CD8-positive, alpha-beta memory T cell (primary cell): ENCODE measurements at regions of chr20 and their contacts with region 1.

Region 1: DNA sequence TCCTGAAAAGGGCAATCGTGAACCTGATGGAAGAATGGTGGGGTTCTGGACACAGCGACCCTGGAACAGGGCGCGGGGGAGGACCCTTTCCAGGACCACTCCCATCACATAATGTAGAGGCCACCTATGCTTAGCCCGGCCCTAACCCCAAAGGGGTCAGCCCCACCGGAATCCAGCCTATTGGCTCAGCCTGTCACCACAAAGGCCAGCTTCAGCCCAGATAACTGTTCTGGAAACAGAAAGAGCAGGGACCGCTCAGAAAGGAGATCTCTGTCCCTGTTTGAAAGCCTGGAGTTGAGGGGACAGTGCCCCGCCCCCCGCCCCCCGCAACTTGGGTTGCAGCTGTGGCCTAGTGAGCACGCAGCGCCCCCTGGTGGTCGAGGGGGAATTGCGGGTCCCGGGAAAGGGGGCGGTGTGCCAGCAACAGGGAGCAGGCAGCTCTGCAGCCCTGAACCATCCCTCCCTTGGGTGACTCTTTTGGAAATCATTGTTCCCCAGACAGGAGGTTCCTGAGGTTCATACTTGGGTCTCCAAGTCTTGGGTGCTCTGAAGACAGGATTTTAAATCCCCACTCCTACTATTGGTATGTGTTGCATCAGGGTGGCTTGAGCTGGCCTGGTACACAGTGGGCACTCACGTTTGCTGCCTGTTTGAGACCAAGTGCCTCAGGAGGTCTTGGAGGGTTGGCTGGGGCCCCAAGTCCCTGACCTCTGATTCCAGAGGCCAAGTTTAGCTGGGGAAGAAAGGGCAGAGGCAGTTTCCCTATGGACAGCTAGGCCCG is 1.5 kb downstream of the SIGLEC1 start:
- DNase-seq: peak; percentile 62 to 77 (median 70)
- H3K4me3 ChIP-seq: no peak overlapping the region
- H3K4me3 Mint-ChIP-seq: no peak overlapping the region
- H3K27ac ChIP-seq: no peak overlapping the region
- H3K27ac Mint-ChIP-seq: no peak overlapping the region
- H3K4me1 ChIP-seq: no peaks in the 10 kb centered on the region
- H3K4me1 Mint-ChIP-seq: peaks cover 3 to 9% (median 8%) of the 10 kb centered on the region in 3 donors
- H3K27me3 ChIP-seq: no peaks in the 10 kb centered on the region
- H3K27me3 Mint-ChIP-seq: peaks cover 0 to 11% of the 10 kb centered on the region in 2 donors

Region 2: GRCh38 chr20:3677733-3678132 is 33.2 kb before region 1 on chr20:
- CTCF ChIA-PET with region 1: interaction called, 13 read pairs
- POLR2A ChIA-PET with region 1: no interaction called
- DNase-seq: no peak
- H3K4me3 ChIP-seq: no peak overlapping the region
- H3K4me3 Mint-ChIP-seq: no peak overlapping the region
- H3K27ac ChIP-seq: no peak overlapping the region
- H3K27ac Mint-ChIP-seq: no peak overlapping the region
- H3K4me1 ChIP-seq: no peaks in the 10 kb centered on the region
- H3K4me1 Mint-ChIP-seq: peaks cover 0 to 20% (median 8%) of the 10 kb centered on the region in 3 donors
- H3K27me3 ChIP-seq: peaks cover 11% of the 10 kb centered on the region
- H3K27me3 Mint-ChIP-seq: peaks cover 46 to 61% of the 10 kb centered on the region in 2 donors

Region 3: GRCh38 chr20:3692706-3693294 is 18.1 kb before region 1 on chr20:
- CTCF ChIA-PET with region 1: interaction called, 11 read pairs
- POLR2A ChIA-PET with region 1: no interaction called
- DNase-seq: no peak
- H3K4me3 ChIP-seq: no peak overlapping the region
- H3K4me3 Mint-ChIP-seq: no peak overlapping the region
- H3K27ac ChIP-seq: no peak overlapping the region
- H3K27ac Mint-ChIP-seq: no peak overlapping the region
- H3K4me1 ChIP-seq: no peaks in the 10 kb centered on the region
- H3K4me1 Mint-ChIP-seq: no peaks in the 10 kb centered on the region
- H3K27me3 ChIP-seq: no peaks in the 10 kb centered on the region
- H3K27me3 Mint-ChIP-seq: peaks cover 0 to 1% of the 10 kb centered on the region in 2 donors

Region 4: GRCh38 chr20:3698591-3699001 is 12.3 kb before region 1 on chr20:
- CTCF ChIA-PET with region 1: interaction called, 11 read pairs
- POLR2A ChIA-PET with region 1: no interaction called
- DNase-seq: peak in 1 of 5 donors; percentile 40
- H3K4me3 ChIP-seq: no peak overlapping the region
- H3K4me3 Mint-ChIP-seq: no peak overlapping the region
- H3K27ac ChIP-seq: no peak overlapping the region
- H3K27ac Mint-ChIP-seq: no peak overlapping the region
- H3K4me1 ChIP-seq: no peaks in the 10 kb centered on the region
- H3K4me1 Mint-ChIP-seq: no peaks in the 10 kb centered on the region
- H3K27me3 ChIP-seq: no peaks in the 10 kb centered on the region
- H3K27me3 Mint-ChIP-seq: peaks cover 1 to 10% of the 10 kb centered on the region in 2 donors

Region 5: DNA sequence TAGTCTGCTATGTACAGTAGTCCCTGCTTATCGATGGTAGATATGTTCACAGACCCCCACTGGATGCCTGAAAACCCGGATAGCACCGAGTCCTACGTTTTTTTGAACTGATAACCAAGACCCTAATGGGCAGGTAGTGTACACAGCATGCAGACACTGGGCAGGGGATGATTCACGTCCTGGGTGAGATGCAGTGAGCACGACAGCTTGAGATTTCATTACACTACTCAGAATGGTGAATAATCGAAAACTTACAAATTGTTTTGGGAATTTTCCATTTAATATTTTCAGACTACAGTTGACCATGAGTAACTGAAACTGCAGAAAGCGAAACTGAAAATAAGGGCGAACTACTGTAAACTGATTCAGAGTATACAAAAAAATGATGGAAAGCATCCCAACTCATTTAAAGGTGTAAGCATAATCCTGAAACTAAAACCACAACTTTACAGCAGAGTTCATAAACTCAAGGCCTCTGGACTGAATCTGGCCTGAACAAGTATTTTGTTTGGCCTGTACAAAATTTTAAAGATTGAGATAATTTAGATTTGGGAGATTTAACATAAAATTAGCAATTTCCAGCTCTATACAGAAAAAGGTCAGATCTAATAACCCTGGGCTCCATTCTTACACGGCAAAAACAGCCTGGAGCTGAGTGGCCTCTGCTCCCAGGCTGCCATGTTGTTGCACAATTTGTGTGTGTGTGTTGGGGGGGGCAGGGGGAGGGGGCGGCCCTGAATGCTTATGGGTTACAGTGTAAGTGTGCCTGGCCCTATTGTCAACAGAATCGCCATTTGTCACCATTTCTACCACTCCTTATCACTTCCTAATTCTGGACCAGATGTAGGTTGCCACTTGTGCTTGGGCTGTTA is 269.6 kb after region 1 on chr20:
- CTCF ChIA-PET with region 1: no interaction called
- POLR2A ChIA-PET with region 1: no interaction called
- DNase-seq: peak in 2 of 5 donors; percentile 7 to 15
- H3K4me3 ChIP-seq: peak overlapping the region; percentile 49
- H3K4me3 Mint-ChIP-seq: peak overlapping the region; percentile 81 to 91 (median 87)
- H3K27ac ChIP-seq: peak overlapping the region; percentile 32
- H3K27ac Mint-ChIP-seq: peak overlapping the region; percentile 78 to 96 (median 90)
- H3K4me1 ChIP-seq: peaks cover 8% of the 10 kb centered on the region
- H3K4me1 Mint-ChIP-seq: peaks cover 20 to 30% (median 23%) of the 10 kb centered on the region in 3 donors
- H3K27me3 ChIP-seq: no peaks in the 10 kb centered on the region
- H3K27me3 Mint-ChIP-seq: no peaks in the 10 kb centered on the region